IMR-90 (cell line): ENCODE measurements at regions of chr3 and their contacts with region 1.

Region 1: DNA sequence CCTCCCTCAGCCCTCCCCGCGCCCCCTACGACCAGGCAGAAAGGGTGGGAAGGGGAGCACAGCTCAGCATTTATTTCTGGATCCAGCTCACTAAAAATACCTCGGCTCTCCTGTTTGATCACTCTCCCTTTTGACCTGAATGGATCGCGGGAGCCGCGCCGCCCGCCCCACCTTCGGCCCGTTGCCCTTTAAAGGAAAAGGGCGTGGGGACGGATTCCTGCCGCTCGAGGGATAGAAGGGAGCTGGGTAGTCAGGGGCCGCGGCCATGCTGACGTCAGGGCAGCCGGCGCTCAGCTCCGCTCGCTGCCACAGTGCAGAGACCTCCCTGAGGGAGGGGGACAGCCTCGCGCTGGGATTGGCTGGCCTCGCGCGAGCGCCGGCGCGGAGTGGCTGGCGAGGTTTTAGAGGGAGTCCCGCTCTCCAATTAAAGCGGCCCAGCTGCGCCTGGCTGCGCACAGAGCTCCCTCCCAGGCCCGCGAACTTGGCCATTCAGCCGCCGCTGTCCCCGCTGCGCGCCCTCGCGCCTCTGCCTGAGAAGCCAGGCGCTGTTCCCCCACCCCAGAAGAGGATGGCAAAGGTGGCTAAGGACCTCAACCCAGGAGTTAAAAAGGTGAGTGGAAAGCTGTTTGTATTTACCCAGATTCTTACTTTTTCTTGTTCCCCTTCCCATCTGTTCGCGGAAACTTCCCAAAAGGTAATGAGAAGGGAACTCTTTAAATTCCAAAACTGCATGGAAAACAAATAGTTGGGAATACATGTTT is at the start of gene LMCD1:
- DNase-seq: peak; percentile 95
- ATAC-seq: peak; percentile 97
- H3K4me3 ChIP-seq: peak within 1 kb of the TSS; percentile 56
- H3K27ac ChIP-seq: peak within 1 kb of the TSS; percentile 95
- H3K4me1 ChIP-seq: peaks cover 24% of the 10 kb centered on the region
- H3K27me3 ChIP-seq: no peaks in the 10 kb centered on the region
- CTCF ChIP-seq: peak; percentile 27; the same call in 1 of the 2 replicates
- POLR2A ChIP-seq: peak; percentile 90
- RAD21 ChIP-seq: no peak; the same call in 1 of the 2 replicates
- total RNA-seq, gene LMCD1: 33.6 and 50.0 TPM in 2 replicates

Region 2: GRCh38 chr3:8143186-8143585 is 358.4 kb before region 1 on chr3:
- CTCF ChIA-PET with region 1: no interaction called
- POLR2A ChIA-PET with region 1: no interaction called
- dilution Hi-C with region 1: no loop called
- in situ Hi-C with region 1: no loop called
- intact Hi-C with region 1: no loop called
- DNase-seq: no peak
- ATAC-seq: no peak
- H3K4me3 ChIP-seq: no peak overlapping the region
- H3K27ac ChIP-seq: no peak overlapping the region
- H3K4me1 ChIP-seq: no peaks in the 10 kb centered on the region
- H3K27me3 ChIP-seq: no peaks in the 10 kb centered on the region
- CTCF ChIP-seq: no peak
- POLR2A ChIP-seq: no peak
- RAD21 ChIP-seq: no peak

Region 3: GRCh38 chr3:8183627-8184026 is 317.9 kb before region 1 on chr3:
- CTCF ChIA-PET with region 1: no interaction called
- POLR2A ChIA-PET with region 1: no interaction called
- dilution Hi-C with region 1: no loop called
- in situ Hi-C with region 1: no loop called
- intact Hi-C with region 1: no loop called
- DNase-seq: no peak
- ATAC-seq: no peak
- H3K4me3 ChIP-seq: no peak overlapping the region
- H3K27ac ChIP-seq: no peak overlapping the region
- H3K4me1 ChIP-seq: no peaks in the 10 kb centered on the region
- H3K27me3 ChIP-seq: no peaks in the 10 kb centered on the region
- CTCF ChIP-seq: no peak
- POLR2A ChIP-seq: no peak
- RAD21 ChIP-seq: no peak

Region 4: GRCh38 chr3:8458711-8459110 is 42.8 kb before region 1 on chr3:
- CTCF ChIA-PET with region 1: no interaction called
- POLR2A ChIA-PET with region 1: no interaction called
- dilution Hi-C with region 1: no loop called
- in situ Hi-C with region 1: no loop called
- intact Hi-C with region 1: loop called (anchors 5 kb)
- DNase-seq: peak; percentile 95
- ATAC-seq: peak; percentile 50
- H3K4me3 ChIP-seq: no peak overlapping the region
- H3K27ac ChIP-seq: peak overlapping the region; percentile 88; the same call in 1 of the 2 replicates
- H3K4me1 ChIP-seq: peaks cover 27% of the 10 kb centered on the region
- H3K27me3 ChIP-seq: no peaks in the 10 kb centered on the region
- CTCF ChIP-seq: no peak
- POLR2A ChIP-seq: no peak
- RAD21 ChIP-seq: no peak

Region 5: GRCh38 chr3:8536096-8537056 is 34.8 kb after region 1 on chr3:
- CTCF ChIA-PET with region 1: interaction called, 5 read pairs
- POLR2A ChIA-PET with region 1: no interaction called
- dilution Hi-C with region 1: no loop called
- in situ Hi-C with region 1: no loop called
- intact Hi-C with region 1: loop called (anchors 5 kb)
- DNase-seq: peak; percentile 88
- ATAC-seq: peak; percentile 66
- H3K4me3 ChIP-seq: no peak overlapping the region
- H3K27ac ChIP-seq: peak overlapping the region; percentile 46; the same call in 1 of the 2 replicates
- H3K4me1 ChIP-seq: peaks cover 28% of the 10 kb centered on the region
- H3K27me3 ChIP-seq: no peaks in the 10 kb centered on the region
- CTCF ChIP-seq: 0 out of 2 replicates have a peak, but pooled peaks have one; percentile 5
- POLR2A ChIP-seq: no peak
- RAD21 ChIP-seq: peak; percentile 17; the same call in 1 of the 2 replicates

Region 6: DNA sequence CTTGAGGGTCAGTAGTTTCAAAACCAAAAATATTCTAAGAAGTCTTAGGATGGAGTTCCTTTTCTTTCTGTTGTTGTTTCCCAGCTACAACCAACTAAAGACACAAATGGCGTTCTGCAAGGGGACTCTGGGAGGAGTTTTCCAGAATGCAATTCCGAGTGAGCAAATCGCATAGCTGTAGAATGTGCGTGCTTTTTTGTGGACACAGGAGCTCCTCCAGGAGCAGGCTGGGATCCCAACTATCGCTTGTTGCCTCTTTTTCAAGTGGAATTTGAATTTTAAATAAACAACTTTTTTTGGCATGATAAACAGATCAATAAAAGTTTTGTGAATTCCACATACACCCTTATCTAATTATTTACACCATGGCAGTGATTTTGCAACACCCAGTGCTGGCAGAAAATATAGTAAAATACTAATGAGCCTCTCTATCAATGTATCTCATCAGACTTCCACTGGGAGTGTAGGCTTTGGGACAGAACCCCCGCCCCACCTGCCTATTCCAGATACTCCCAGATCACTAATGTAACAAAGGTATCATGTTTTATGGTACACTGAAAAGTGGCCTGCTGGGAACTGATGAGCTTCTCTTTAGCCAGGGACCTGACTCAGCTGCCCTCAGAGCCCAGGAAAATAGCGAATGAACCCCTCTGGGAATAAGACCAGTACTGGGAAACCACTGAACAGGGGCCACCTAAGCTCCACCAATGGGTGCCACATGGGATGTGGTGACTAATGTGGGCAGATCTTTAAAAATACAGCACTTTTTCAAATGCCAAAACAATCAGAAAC is 66.4 kb after region 1 on chr3:
- CTCF ChIA-PET with region 1: no interaction called
- POLR2A ChIA-PET with region 1: no interaction called
- dilution Hi-C with region 1: no loop called
- in situ Hi-C with region 1: no loop called
- intact Hi-C with region 1: no loop called
- DNase-seq: no peak
- ATAC-seq: no peak
- H3K4me3 ChIP-seq: no peak overlapping the region
- H3K27ac ChIP-seq: no peak overlapping the region
- H3K4me1 ChIP-seq: no peaks in the 10 kb centered on the region
- H3K27me3 ChIP-seq: no peaks in the 10 kb centered on the region
- CTCF ChIP-seq: no peak
- POLR2A ChIP-seq: no peak
- RAD21 ChIP-seq: no peak

Region 7: GRCh38 chr3:8579096-8579495 is 77.5 kb after region 1 on chr3:
- CTCF ChIA-PET with region 1: interaction called, 3 read pairs
- POLR2A ChIA-PET with region 1: interaction called, 3 read pairs
- dilution Hi-C with region 1: no loop called
- in situ Hi-C with region 1: no loop called
- intact Hi-C with region 1: loop called (anchors 1 kb)
- DNase-seq: peak; percentile 42
- ATAC-seq: no peak
- H3K4me3 ChIP-seq: no peak overlapping the region
- H3K27ac ChIP-seq: no peak overlapping the region
- H3K4me1 ChIP-seq: peaks cover 32% of the 10 kb centered on the region
- H3K27me3 ChIP-seq: no peaks in the 10 kb centered on the region
- CTCF ChIP-seq: no peak
- POLR2A ChIP-seq: no peak
- RAD21 ChIP-seq: no peak

Region 8: DNA sequence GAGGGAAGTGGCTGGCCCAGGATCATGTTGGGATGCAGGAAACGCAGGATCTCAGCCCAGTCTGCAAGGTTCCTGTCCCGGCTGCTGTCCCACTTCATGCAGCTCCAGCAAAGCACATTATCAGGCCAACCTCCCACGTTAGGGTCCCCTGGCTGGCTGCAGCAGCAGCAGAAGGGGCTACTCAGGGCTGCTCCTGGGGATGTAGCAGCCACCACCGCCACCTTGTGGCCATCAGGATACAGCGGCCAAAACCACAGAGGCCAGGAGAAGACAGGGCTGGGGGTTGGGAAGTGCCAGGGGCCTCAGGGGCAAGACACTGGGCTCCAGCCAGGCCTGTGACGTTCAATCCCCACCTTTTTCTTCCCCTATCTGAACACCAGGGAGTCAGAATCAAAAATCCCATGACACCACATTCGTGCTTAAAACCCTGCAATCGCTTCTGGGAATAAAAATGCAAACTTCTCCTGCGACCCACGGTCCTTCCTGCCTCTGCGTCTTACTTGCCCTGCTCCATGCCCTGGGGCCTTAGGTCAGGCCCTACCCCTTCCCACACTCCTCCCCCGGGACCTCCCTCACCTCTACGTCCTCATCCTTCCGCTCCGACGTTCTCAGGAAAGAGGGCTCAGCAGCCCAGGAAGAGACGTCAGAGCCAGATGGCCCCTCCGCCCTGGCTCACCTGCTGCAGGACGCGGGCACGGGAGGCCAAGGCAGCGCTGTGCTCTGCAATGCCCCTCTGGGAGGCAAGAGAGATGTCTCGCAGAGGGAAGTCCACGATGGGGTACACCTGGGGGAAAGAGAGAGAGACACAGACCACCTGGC is 121.5 kb after region 1 on chr3:
- CTCF ChIA-PET with region 1: interaction called, 3 read pairs
- POLR2A ChIA-PET with region 1: no interaction called
- dilution Hi-C with region 1: no loop called
- in situ Hi-C with region 1: no loop called
- intact Hi-C with region 1: loop called (anchors 1 kb)
- DNase-seq: peak; percentile 70
- ATAC-seq: peak; percentile 91
- H3K4me3 ChIP-seq: no peak overlapping the region
- H3K27ac ChIP-seq: no peak overlapping the region
- H3K4me1 ChIP-seq: peaks cover 32% of the 10 kb centered on the region
- H3K27me3 ChIP-seq: no peaks in the 10 kb centered on the region; the same call in 1 of the 2 replicates
- CTCF ChIP-seq: peak; percentile 94
- POLR2A ChIP-seq: no peak
- RAD21 ChIP-seq: peak; percentile 94

Region 9: GRCh38 chr3:8739757-8740491 is 238.4 kb after region 1 on chr3:
- CTCF ChIA-PET with region 1: no interaction called
- POLR2A ChIA-PET with region 1: no interaction called
- dilution Hi-C with region 1: no loop called
- in situ Hi-C with region 1: no loop called
- intact Hi-C with region 1: no loop called
- DNase-seq: peak; percentile 78
- ATAC-seq: peak; percentile 4; the same call in 1 of the 2 replicates
- H3K4me3 ChIP-seq: no peak overlapping the region
- H3K27ac ChIP-seq: no peak overlapping the region
- H3K4me1 ChIP-seq: peaks cover 17% of the 10 kb centered on the region
- H3K27me3 ChIP-seq: no peaks in the 10 kb centered on the region
- CTCF ChIP-seq: no peak
- POLR2A ChIP-seq: no peak
- RAD21 ChIP-seq: no peak